CD4-positive, alpha-beta T cell (primary cell): ENCODE measurements at regions of chr14 and their contacts with region 1.

Region 1: DNA sequence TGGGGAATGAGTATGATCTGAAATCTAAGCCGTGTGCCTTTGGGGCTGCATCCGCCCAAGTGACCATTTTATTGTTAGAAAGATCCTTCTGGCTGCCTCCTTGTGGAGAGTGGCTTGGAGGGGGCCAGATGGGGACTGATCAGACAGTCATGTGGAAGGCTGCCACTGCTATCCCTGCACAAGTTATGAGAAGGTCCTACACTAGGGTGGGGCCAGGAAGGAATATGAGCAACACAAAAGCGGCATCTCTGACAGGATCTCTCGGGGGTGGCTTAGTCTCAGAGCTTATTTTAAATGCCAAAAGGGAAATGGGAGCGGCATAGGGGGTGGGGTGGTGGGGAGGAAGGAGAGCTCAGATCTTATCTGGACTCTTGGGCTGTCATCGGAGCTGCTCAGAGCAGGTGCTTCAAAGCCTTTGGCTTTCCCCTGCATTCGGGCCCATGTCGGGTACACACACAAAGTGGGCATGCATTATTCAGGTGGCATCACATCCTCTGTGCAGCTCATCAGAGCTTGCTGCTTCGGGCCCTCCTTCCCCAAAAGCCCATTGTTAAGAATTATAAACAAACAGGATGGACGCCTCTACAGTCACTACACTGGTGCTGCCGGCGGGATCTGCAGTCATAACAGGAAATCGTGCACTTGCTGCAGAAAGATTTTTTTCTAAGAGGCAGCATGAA is 805.4 kb downstream of the VRK1 start:
- DNase-seq: peak; percentile 66 to 93 (median 78)
- ATAC-seq: peak; percentile 88
- H3K4me3 ChIP-seq: peak overlapping the region; percentile 32
- H3K4me3 Mint-ChIP-seq: no peak overlapping the region
- H3K27ac ChIP-seq: peak overlapping the region; percentile 77 to 86
- H3K27ac Mint-ChIP-seq: no peak overlapping the region
- H3K4me1 ChIP-seq: peaks cover 52% of the 10 kb centered on the region
- H3K4me1 Mint-ChIP-seq: no peaks in the 10 kb centered on the region
- H3K27me3 ChIP-seq: no peaks in the 10 kb centered on the region
- H3K27me3 Mint-ChIP-seq: no peaks in the 10 kb centered on the region
- CTCF ChIP-seq: no peak

Region 2: GRCh38 chr14:97185186-97185585 is 417.4 kb before region 1 on chr14:
- CTCF ChIA-PET with region 1: no interaction called
- POLR2A ChIA-PET with region 1: no interaction called
- intact Hi-C with region 1: loop called in 1 of 2 experiments (anchors 10 kb)
- DNase-seq: peak in 9 of 14 experiments; percentile 8 to 60 (median 24)
- ATAC-seq: no peak
- H3K4me3 ChIP-seq: no peak overlapping the region
- H3K4me3 Mint-ChIP-seq: no peak overlapping the region
- H3K27ac ChIP-seq: no peak overlapping the region
- H3K27ac Mint-ChIP-seq: no peak overlapping the region
- H3K4me1 ChIP-seq: peaks cover 5% of the 10 kb centered on the region
- H3K4me1 Mint-ChIP-seq: peaks cover 7% of the 10 kb centered on the region
- H3K27me3 ChIP-seq: no peaks in the 10 kb centered on the region
- H3K27me3 Mint-ChIP-seq: no peaks in the 10 kb centered on the region
- CTCF ChIP-seq: peak; percentile 54

Region 3: DNA sequence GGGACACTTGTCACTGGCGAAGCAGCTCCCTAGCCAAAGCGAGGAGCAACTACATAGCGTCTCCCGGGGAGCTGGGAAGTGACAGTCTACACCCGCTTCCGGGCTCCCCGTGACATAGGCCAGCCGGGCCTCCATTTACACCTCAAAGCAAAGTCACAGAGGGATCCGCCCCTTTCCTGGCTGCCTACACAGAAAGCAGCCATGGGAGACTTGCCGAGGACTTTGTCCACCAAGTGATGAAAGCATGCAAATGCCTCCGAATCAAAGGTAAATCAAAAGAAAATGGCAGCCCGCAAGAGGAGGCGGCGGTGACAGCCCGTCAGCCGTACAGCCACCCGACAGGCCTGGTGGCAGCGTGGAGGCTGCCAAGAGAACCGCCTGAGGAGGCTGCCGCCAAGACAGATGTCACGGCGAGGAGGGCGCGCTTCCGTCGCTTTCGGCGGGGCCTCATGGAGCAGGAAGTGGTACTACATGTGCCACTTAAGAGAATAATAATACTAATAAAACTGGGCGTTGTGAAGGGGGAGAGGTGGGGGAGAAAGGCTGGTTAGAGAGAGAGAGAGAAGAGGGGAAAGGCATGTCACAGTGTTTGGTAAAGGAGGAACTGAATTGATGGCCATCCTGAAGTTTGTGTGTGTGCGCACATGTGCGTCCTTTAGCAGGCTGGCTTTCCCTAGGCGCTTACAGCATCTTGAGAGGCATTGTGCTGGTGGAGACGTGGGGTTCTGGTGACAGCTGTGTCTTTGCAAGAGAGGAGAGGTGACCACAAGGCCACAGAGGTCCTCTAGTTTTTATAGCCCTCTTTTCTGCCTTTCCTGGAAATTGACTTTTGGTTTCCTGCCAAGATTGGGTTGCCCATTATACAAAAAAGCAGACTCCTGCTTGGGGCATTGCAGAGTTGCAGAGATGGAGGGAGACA is 143.7 kb before region 1 on chr14:
- CTCF ChIA-PET with region 1: interaction called, 3 read pairs
- POLR2A ChIA-PET with region 1: interaction called, 12 read pairs
- intact Hi-C with region 1: loop called in 1 of 2 experiments (anchors 2 kb)
- DNase-seq: peak; percentile 70 to 94 (median 80)
- ATAC-seq: peak; percentile 86
- H3K4me3 ChIP-seq: peak overlapping the region; percentile 61
- H3K4me3 Mint-ChIP-seq: peak overlapping the region; percentile 92
- H3K27ac ChIP-seq: peak overlapping the region; percentile 76 to 89
- H3K27ac Mint-ChIP-seq: peak overlapping the region; percentile 98
- H3K4me1 ChIP-seq: peaks cover 42% of the 10 kb centered on the region
- H3K4me1 Mint-ChIP-seq: peaks cover 65% of the 10 kb centered on the region
- H3K27me3 ChIP-seq: no peaks in the 10 kb centered on the region
- H3K27me3 Mint-ChIP-seq: no peaks in the 10 kb centered on the region
- CTCF ChIP-seq: no peak

Region 4: DNA sequence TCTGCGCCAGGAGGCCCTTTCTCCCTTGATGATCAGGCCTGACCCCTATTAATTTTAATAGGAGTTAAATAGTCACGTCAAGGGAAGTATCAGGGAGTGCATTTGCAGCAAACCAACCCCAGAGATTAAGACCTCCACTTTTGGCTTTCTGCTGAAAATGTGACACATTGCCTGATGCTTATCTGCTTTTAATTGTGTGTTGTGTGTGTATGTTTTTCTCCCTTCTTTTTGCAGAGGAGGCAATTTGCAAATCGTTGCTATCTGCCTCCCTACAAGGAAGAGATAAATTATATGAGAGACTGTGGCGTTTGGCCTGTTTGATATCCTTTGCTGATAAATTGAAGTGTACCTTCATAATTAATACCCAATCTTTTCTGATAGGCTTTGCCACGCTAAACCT is 17.5 kb after region 1 on chr14:
- CTCF ChIA-PET with region 1: interaction called, 8 read pairs
- POLR2A ChIA-PET with region 1: interaction called, 49 read pairs
- intact Hi-C with region 1: loop called in 1 of 2 experiments (anchors 1 kb)
- DNase-seq: peak in 3 of 14 experiments; percentile 26 to 39 (median 29)
- ATAC-seq: peak; percentile 18
- H3K4me3 ChIP-seq: no peak overlapping the region
- H3K4me3 Mint-ChIP-seq: peak overlapping the region; percentile 87
- H3K27ac ChIP-seq: peak overlapping the region; percentile 42 to 46
- H3K27ac Mint-ChIP-seq: peak overlapping the region; percentile 94
- H3K4me1 ChIP-seq: peaks cover 20% of the 10 kb centered on the region
- H3K4me1 Mint-ChIP-seq: peaks cover 51% of the 10 kb centered on the region
- H3K27me3 ChIP-seq: no peaks in the 10 kb centered on the region
- H3K27me3 Mint-ChIP-seq: no peaks in the 10 kb centered on the region
- CTCF ChIP-seq: no peak

Region 5: GRCh38 chr14:97641827-97642226 is 39.2 kb after region 1 on chr14:
- CTCF ChIA-PET with region 1: interaction called, 3 read pairs
- POLR2A ChIA-PET with region 1: no interaction called
- intact Hi-C with region 1: loop called in 1 of 2 experiments (anchors 1 kb)
- DNase-seq: peak in 1 of 14 experiments; percentile 20
- ATAC-seq: no peak
- H3K4me3 ChIP-seq: no peak overlapping the region
- H3K4me3 Mint-ChIP-seq: peak overlapping the region; percentile 67
- H3K27ac ChIP-seq: no peak overlapping the region
- H3K27ac Mint-ChIP-seq: peak overlapping the region; percentile 84
- H3K4me1 ChIP-seq: peaks cover 6% of the 10 kb centered on the region
- H3K4me1 Mint-ChIP-seq: peaks cover 66% of the 10 kb centered on the region
- H3K27me3 ChIP-seq: no peaks in the 10 kb centered on the region
- H3K27me3 Mint-ChIP-seq: no peaks in the 10 kb centered on the region
- CTCF ChIP-seq: no peak

Region 6: GRCh38 chr14:97724265-97724731 is 121.7 kb after region 1 on chr14:
- CTCF ChIA-PET with region 1: no interaction called
- POLR2A ChIA-PET with region 1: interaction called, 8 read pairs
- intact Hi-C with region 1: loop called (anchors 2 to 5 kb)
- DNase-seq: peak in 13 of 14 experiments; percentile 9 to 76 (median 37)
- ATAC-seq: peak; percentile 80
- H3K4me3 ChIP-seq: peak overlapping the region; percentile 36
- H3K4me3 Mint-ChIP-seq: peak overlapping the region; percentile 85
- H3K27ac ChIP-seq: peak overlapping the region; percentile 75 to 80
- H3K27ac Mint-ChIP-seq: peak overlapping the region; percentile 94
- H3K4me1 ChIP-seq: peaks cover 54% of the 10 kb centered on the region
- H3K4me1 Mint-ChIP-seq: peaks cover 90% of the 10 kb centered on the region
- H3K27me3 ChIP-seq: no peaks in the 10 kb centered on the region
- H3K27me3 Mint-ChIP-seq: no peaks in the 10 kb centered on the region
- CTCF ChIP-seq: peak; percentile 20

Region 7: GRCh38 chr14:98350213-98350612 is 747.6 kb after region 1 on chr14:
- CTCF ChIA-PET with region 1: no interaction called
- POLR2A ChIA-PET with region 1: no interaction called
- intact Hi-C with region 1: no loop called
- DNase-seq: no peak
- ATAC-seq: no peak
- H3K4me3 ChIP-seq: no peak overlapping the region
- H3K4me3 Mint-ChIP-seq: no peak overlapping the region
- H3K27ac ChIP-seq: no peak overlapping the region
- H3K27ac Mint-ChIP-seq: peak overlapping the region; percentile 55
- H3K4me1 ChIP-seq: peaks cover 7% of the 10 kb centered on the region
- H3K4me1 Mint-ChIP-seq: peaks cover 46% of the 10 kb centered on the region
- H3K27me3 ChIP-seq: no peaks in the 10 kb centered on the region
- H3K27me3 Mint-ChIP-seq: no peaks in the 10 kb centered on the region
- CTCF ChIP-seq: no peak

Region 8: GRCh38 chr14:99271951-99272631 is 1669.5 kb after region 1 on chr14 and contains the start of gene BCL11B:
- CTCF ChIA-PET with region 1: no interaction called
- POLR2A ChIA-PET with region 1: interaction called, 17 read pairs
- intact Hi-C with region 1: loop called in 1 of 2 experiments (anchors 5 kb)
- DNase-seq: peak; percentile 78 to 96 (median 88)
- ATAC-seq: peak; percentile 76
- H3K4me3 ChIP-seq: peak within 1 kb of the TSS; percentile 97
- H3K4me3 Mint-ChIP-seq: peak within 1 kb of the TSS; percentile 100
- H3K27ac ChIP-seq: peak within 1 kb of the TSS; percentile 18 to 79
- H3K27ac Mint-ChIP-seq: peak within 1 kb of the TSS; percentile 99
- H3K4me1 ChIP-seq: peaks cover 36% of the 10 kb centered on the region
- H3K4me1 Mint-ChIP-seq: peaks cover 48% of the 10 kb centered on the region
- H3K27me3 ChIP-seq: no peaks in the 10 kb centered on the region
- H3K27me3 Mint-ChIP-seq: peaks cover 5% of the 10 kb centered on the region
- CTCF ChIP-seq: peak; percentile 71
- total RNA-seq, gene BCL11B: 244 to 254 TPM